ENCODE measurements at regions of chr3 and their contacts with region 1.

Region 1: GRCh38 chr3:192892981-192893700 is 24.5 kb downstream of the MB21D2 start:
- DNase-seq: peak; percentile 81
- ATAC-seq: peak; percentile 94
- H3K4me3 Mint-ChIP-seq: no peak overlapping the region
- H3K27ac Mint-ChIP-seq: peak overlapping the region; percentile 32
- H3K4me1 Mint-ChIP-seq: peaks cover 31% of the 10 kb centered on the region
- H3K27me3 Mint-ChIP-seq: peaks cover 20% of the 10 kb centered on the region

Region 2: DNA sequence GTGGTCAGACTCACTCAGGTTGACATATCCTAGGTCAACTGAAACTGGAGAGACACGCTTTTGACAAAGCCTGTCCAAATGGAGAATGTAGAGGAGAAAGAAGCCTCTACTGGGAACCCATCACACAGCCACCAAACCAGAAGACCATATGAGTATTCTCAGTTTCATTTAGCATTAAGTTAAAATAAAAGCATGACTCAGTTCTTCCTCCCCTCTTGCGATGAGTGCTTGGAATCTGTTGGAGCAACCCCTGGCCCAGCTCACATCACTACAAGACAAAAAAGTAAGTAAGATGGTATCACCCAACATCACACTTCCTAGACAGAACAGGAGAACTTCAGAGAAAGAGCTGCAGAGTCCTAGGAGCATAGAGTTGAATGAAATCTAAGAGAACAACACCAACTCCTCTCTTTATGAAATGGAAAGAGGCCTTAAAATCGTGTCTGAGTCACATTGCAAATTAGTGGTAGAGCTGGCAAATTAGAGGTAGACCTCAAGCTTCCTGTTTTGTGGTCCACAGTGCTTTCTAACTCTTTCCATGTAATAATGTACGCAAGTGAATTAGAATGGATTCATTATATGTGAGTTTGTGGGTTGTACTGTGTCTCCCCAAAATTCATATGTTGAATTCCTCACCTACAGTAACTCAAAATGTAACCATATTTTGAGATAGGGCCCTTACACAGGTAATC is 217.0 kb before region 1 on chr3:
- CTCF ChIA-PET with region 1: no interaction called
- POLR2A ChIA-PET with region 1: no interaction called
- intact Hi-C with region 1: loop called (anchors 1 to 5 kb)
- DNase-seq: peak; percentile 42
- ATAC-seq: peak; percentile 77
- H3K4me3 Mint-ChIP-seq: peak overlapping the region; percentile 14
- H3K27ac Mint-ChIP-seq: peak overlapping the region; percentile 76
- H3K4me1 Mint-ChIP-seq: peaks cover 9% of the 10 kb centered on the region
- H3K27me3 Mint-ChIP-seq: peaks cover 13% of the 10 kb centered on the region

Region 3: GRCh38 chr3:192851821-192852424 is 41.2 kb before region 1 on chr3:
- CTCF ChIA-PET with region 1: interaction called, 3 read pairs
- POLR2A ChIA-PET with region 1: interaction called, 5 read pairs
- intact Hi-C with region 1: loop called (anchors 2 kb)
- DNase-seq: no peak
- ATAC-seq: no peak
- H3K4me3 Mint-ChIP-seq: no peak overlapping the region
- H3K27ac Mint-ChIP-seq: no peak overlapping the region
- H3K4me1 Mint-ChIP-seq: peaks cover 18% of the 10 kb centered on the region
- H3K27me3 Mint-ChIP-seq: peaks cover 11% of the 10 kb centered on the region

Region 4: GRCh38 chr3:192879336-192880106 is 13.6 kb before region 1 on chr3:
- CTCF ChIA-PET with region 1: no interaction called
- POLR2A ChIA-PET with region 1: no interaction called
- intact Hi-C with region 1: no loop called
- DNase-seq: no peak
- ATAC-seq: no peak
- H3K4me3 Mint-ChIP-seq: no peak overlapping the region
- H3K27ac Mint-ChIP-seq: no peak overlapping the region
- H3K4me1 Mint-ChIP-seq: peaks cover 3% of the 10 kb centered on the region
- H3K27me3 Mint-ChIP-seq: peaks cover 9% of the 10 kb centered on the region

Region 5: GRCh38 chr3:192917404-192918274 is 24.5 kb after region 1 on chr3 and contains the start of gene MB21D2:
- CTCF ChIA-PET with region 1: interaction called, 4 read pairs
- POLR2A ChIA-PET with region 1: interaction called, 3 read pairs
- intact Hi-C with region 1: loop called (anchors 1 kb)
- DNase-seq: peak; percentile 67
- ATAC-seq: peak; percentile 63
- H3K4me3 Mint-ChIP-seq: peak within 1 kb of the TSS; percentile 82
- H3K27ac Mint-ChIP-seq: peak within 1 kb of the TSS; percentile 71
- H3K4me1 Mint-ChIP-seq: peaks cover 20% of the 10 kb centered on the region
- H3K27me3 Mint-ChIP-seq: peaks cover 65% of the 10 kb centered on the region
- total RNA-seq, gene MB21D2: 2.2 to 2.5 TPM

Region 6: GRCh38 chr3:192957441-192958021 is 64.4 kb after region 1 on chr3:
- CTCF ChIA-PET with region 1: no interaction called
- POLR2A ChIA-PET with region 1: no interaction called
- intact Hi-C with region 1: loop called in 1 of 2 experiments (anchors 5 kb)
- DNase-seq: peak; percentile 16
- ATAC-seq: peak; percentile 78
- H3K4me3 Mint-ChIP-seq: no peak overlapping the region
- H3K27ac Mint-ChIP-seq: peak overlapping the region; percentile 47
- H3K4me1 Mint-ChIP-seq: peaks cover 14% of the 10 kb centered on the region
- H3K27me3 Mint-ChIP-seq: peaks cover 10% of the 10 kb centered on the region